ENCODE measurements at regions of chr2 and their contacts with region 1.

Region 1: GRCh38 chr2:190718652-190719526 is 70.0 kb downstream of the NAB1 start:
- DNase-seq: peak; percentile 15
- ATAC-seq: peak; percentile 93
- H3K4me3 ChIP-seq: no peak overlapping the region
- H3K27ac ChIP-seq: no peak overlapping the region; the same call in 1 of the 2 replicates
- H3K4me1 ChIP-seq: peaks cover 9% of the 10 kb centered on the region
- H3K27me3 ChIP-seq: no peaks in the 10 kb centered on the region
- CTCF ChIP-seq: no peak

Region 2: GRCh38 chr2:190682168-190682567 is 36.7 kb before region 1 on chr2:
- CTCF ChIA-PET with region 1: no interaction called
- POLR2A ChIA-PET with region 1: interaction called, 11 read pairs
- in situ Hi-C with region 1: no loop called
- intact Hi-C with region 1: no loop called
- DNase-seq: peak; percentile 12
- ATAC-seq: no peak
- H3K4me3 ChIP-seq: no peak overlapping the region
- H3K27ac ChIP-seq: no peak overlapping the region
- H3K4me1 ChIP-seq: peaks cover 4% of the 10 kb centered on the region; the same call in 1 of the 2 replicates
- H3K27me3 ChIP-seq: no peaks in the 10 kb centered on the region
- CTCF ChIP-seq: no peak

Region 3: GRCh38 chr2:190940454-190940853 is 221.6 kb after region 1 on chr2:
- CTCF ChIA-PET with region 1: interaction called, 10 read pairs
- POLR2A ChIA-PET with region 1: no interaction called
- in situ Hi-C with region 1: no loop called
- intact Hi-C with region 1: no loop called
- DNase-seq: no peak
- ATAC-seq: no peak
- H3K4me3 ChIP-seq: no peak overlapping the region
- H3K27ac ChIP-seq: no peak overlapping the region
- H3K4me1 ChIP-seq: no peaks in the 10 kb centered on the region
- H3K27me3 ChIP-seq: no peaks in the 10 kb centered on the region
- CTCF ChIP-seq: no peak